ENCODE measurements at regions of chr1 and their contacts with region 1.

Region 1: GRCh38 chr1:107414560-107414959 is 273.7 kb downstream of the NTNG1 start:
- DNase-seq: no peak
- ATAC-seq: no peak
- H3K4me3 Mint-ChIP-seq: no peak overlapping the region
- H3K27ac Mint-ChIP-seq: no peak overlapping the region
- H3K4me1 Mint-ChIP-seq: no peaks in the 10 kb centered on the region
- H3K27me3 Mint-ChIP-seq: peaks cover 3% of the 10 kb centered on the region
- CTCF ChIP-seq: no peak

Region 2: GRCh38 chr1:107378527-107379270 is 35.9 kb before region 1 on chr1:
- CTCF ChIA-PET with region 1: no interaction called
- POLR2A ChIA-PET with region 1: interaction called, 16 read pairs
- intact Hi-C with region 1: no loop called
- DNase-seq: no peak
- ATAC-seq: no peak
- H3K4me3 Mint-ChIP-seq: no peak overlapping the region
- H3K27ac Mint-ChIP-seq: no peak overlapping the region
- H3K4me1 Mint-ChIP-seq: no peaks in the 10 kb centered on the region
- H3K27me3 Mint-ChIP-seq: no peaks in the 10 kb centered on the region
- CTCF ChIP-seq: no peak